Panc1 (cell line): ENCODE measurements at regions of chr13 and their contacts with region 1.

Region 1: DNA sequence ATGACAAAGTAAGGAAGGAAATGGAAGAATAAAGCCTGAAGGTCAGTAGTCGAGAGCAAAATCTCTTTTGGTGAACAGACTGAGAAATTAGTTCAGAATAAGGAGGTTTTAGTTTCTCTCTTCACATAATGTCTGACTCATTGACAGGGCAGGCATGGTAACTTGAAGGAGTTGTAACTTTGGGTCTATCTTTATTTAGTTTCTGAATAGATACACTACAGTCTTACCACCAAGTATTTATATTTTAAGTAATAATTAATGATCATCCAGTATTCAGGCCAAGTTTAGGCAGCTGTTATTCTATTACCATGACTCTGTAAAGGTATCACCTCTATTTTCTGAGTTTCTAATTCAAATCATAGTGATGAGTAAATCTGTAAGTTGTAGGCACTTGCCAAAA is 219.9 kb downstream of the SPRY2 start:
- DNase-seq: no peak
- ATAC-seq: no peak
- H3K4me3 ChIP-seq: no peak overlapping the region
- H3K27ac ChIP-seq: no peak overlapping the region
- H3K4me1 ChIP-seq: no peaks in the 10 kb centered on the region
- H3K27me3 ChIP-seq: no peaks in the 10 kb centered on the region
- CTCF ChIP-seq: no peak

Region 2: GRCh38 chr13:79212064-79212619 is 908.9 kb before region 1 on chr13:
- CTCF ChIA-PET with region 1: no interaction called
- POLR2A ChIA-PET with region 1: no interaction called
- in situ Hi-C with region 1: no loop called
- intact Hi-C with region 1: no loop called
- DNase-seq: no peak
- ATAC-seq: no peak
- H3K4me3 ChIP-seq: no peak overlapping the region
- H3K27ac ChIP-seq: no peak overlapping the region
- H3K4me1 ChIP-seq: no peaks in the 10 kb centered on the region
- H3K27me3 ChIP-seq: no peaks in the 10 kb centered on the region
- CTCF ChIP-seq: no peak

Region 3: DNA sequence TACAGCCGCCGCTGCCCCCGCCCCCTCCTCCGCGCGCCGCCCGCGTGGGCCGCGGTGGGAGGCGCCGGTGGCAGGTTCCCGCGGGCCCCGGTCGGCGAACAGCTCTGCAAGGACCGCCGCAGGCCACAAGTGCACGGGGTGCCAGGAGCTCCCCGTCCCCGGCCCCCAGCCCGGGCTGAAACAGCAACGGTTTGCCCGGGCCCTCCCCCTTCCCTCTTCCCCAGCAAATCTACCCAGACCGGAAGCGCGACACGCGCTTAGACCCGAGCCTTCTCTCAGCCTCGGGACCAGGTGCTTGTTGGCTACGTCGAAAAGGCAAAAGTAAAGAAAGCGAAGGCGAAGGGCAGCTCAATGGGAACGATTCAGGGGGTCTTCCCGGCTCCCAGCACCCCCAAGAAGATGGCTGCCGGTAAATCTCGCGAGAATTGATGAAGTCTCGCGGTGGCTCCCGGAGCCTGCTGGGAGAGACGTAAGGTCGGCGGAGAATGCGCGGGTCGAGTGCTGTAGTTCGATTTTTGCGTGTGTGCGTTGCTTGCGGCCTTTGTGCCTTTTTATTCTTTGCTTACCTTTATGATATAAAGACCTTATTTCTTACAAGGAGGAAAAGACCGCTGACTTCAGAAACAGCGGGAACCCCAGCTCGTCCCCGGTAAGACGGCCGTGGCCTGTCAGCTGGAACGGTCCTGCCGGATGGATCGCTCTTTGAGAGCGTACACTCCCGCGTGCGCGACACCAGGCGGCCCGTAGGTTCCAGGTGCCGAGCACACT is 715.0 kb before region 1 on chr13 and contains the start of gene RBM26:
- CTCF ChIA-PET with region 1: no interaction called
- POLR2A ChIA-PET with region 1: interaction called, 13 read pairs
- in situ Hi-C with region 1: no loop called
- intact Hi-C with region 1: no loop called
- DNase-seq: peak; percentile 70
- ATAC-seq: peak; percentile 95
- H3K4me3 ChIP-seq: peak within 1 kb of the TSS; percentile 79 to 92
- H3K27ac ChIP-seq: peak within 1 kb of the TSS; percentile 92
- H3K4me1 ChIP-seq: peaks cover 28% of the 10 kb centered on the region
- H3K27me3 ChIP-seq: no peaks in the 10 kb centered on the region
- CTCF ChIP-seq: no peak
- total RNA-seq, gene RBM26: 32.2 TPM